Transverse colon (tissue), 4 donors: ENCODE measurements at regions of chr4 and their contacts with region 1.

Region 1: DNA sequence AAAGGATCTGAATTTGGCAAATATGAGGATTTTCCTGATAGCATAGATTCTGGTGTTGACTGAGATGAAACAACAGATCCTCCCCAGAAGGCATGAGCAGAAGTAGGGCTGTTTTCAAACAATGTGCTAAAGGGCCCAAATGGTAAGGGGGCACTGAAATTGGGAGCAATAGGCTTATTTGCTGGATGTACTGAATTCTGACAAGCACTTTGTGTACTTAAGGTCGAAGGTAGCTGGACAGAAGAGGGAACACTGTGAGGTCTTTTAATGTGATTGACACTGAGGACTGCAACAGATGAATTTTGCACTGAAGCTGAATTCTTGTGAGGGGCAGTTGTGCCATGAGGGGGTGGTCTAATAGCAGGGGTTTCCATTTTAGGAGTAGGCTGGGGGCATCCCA is 21.2 kb upstream of the COX18 start:
- DNase-seq: no peak
- H3K4me3 ChIP-seq: no peak overlapping the region
- H3K27ac ChIP-seq: no peak overlapping the region
- H3K4me1 ChIP-seq: peaks cover 0 to 7% (median 0%) of the 10 kb centered on the region in 4 donors
- H3K27me3 ChIP-seq: no peaks in the 10 kb centered on the region
- CTCF ChIP-seq: no peak
- EP300 ChIP-seq: no peak
- POLR2A ChIP-seq: no peak

Region 2: DNA sequence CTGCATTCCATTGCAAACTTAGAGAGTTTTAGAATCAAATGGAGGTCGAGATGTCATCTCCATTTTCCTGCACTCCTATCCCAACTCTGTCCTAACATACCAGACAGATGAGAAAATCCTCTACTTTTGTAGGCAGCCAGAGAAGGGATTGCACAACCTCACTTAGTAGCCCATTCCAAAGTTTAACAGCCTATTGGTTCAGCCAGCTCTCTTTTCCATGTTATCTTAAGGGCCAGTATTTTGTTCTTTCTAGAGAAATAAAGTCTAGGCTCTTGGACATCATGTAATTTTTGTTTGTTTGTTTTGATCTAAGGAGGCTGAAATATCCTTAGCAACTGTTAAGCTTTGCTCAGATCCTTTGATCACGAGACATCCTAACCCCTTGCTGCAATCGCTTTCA is 194.2 kb before region 1 on chr4:
- in situ Hi-C with region 1: no loop called
- intact Hi-C with region 1: no loop called
- DNase-seq: no peak
- H3K4me3 ChIP-seq: no peak overlapping the region
- H3K27ac ChIP-seq: no peak overlapping the region
- H3K4me1 ChIP-seq: no peaks in the 10 kb centered on the region
- H3K27me3 ChIP-seq: no peaks in the 10 kb centered on the region
- CTCF ChIP-seq: no peak
- EP300 ChIP-seq: no peak
- POLR2A ChIP-seq: no peak

Region 3: GRCh38 chr4:73109493-73109892 is 18.8 kb after region 1 on chr4:
- in situ Hi-C with region 1: no loop called
- intact Hi-C with region 1: loop called (anchors 1 kb)
- DNase-seq: no peak
- H3K4me3 ChIP-seq: no peak overlapping the region
- H3K27ac ChIP-seq: no peak overlapping the region
- H3K4me1 ChIP-seq: no peaks in the 10 kb centered on the region
- H3K27me3 ChIP-seq: no peaks in the 10 kb centered on the region
- CTCF ChIP-seq: no peak
- EP300 ChIP-seq: no peak
- POLR2A ChIP-seq: no peak